OCI-LY7 (cell line): ENCODE measurements at regions of chr2 and their contacts with region 1.

Region 1: GRCh38 chr2:46984642-46985476 is 69.3 kb upstream of the MCFD2 start:
- DNase-seq: peak; percentile 72
- H3K4me3 ChIP-seq: peak overlapping the region; percentile 61
- H3K27ac ChIP-seq: peak overlapping the region; percentile 99
- H3K4me1 ChIP-seq: peaks cover 87% of the 10 kb centered on the region
- CTCF ChIP-seq: no peak

Region 2: DNA sequence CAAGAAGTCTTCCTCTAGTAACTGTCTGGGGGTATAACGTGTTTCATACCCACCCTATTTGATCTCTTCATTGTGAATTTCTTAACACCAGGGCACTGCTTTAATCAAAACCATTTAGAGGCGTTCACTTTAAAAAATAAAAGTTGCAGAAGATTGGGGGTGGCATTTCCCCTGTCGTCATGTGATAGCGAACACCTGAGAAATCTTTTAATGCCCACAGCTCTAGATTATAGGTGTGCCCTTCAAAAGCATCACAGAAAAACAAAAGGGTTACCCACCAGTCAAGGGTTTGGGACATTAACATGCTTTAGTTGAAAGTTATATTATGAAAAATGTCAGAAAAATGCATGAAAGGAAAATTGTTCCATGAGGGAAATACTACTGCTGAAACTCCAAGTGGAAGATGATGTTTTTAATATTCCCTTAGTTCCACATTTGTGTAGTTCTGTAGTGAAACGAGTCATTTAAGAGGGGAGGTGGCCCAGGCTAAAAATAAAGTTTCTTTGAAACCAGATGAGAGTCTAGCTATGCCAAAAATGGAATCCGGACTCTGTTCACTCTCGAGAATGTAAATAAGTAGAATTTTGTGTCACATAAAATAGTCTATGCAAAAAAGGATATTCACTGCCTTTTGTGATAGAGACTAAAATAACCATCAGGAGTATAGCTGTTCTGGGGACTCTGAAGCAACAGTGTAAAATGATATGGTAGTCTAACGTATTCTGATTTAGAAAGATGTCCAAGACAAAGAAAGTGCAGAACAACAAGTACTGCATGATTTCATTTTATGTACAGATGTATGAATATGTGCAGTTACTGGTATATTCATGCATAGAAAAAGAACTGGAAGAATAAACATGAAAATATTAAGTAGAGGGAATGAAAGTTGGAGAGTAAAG is 410.2 kb before region 1 on chr2:
- CTCF ChIA-PET with region 1: no interaction called
- POLR2A ChIA-PET with region 1: no interaction called
- intact Hi-C with region 1: loop called (anchors 5 kb)
- DNase-seq: peak; percentile 91
- H3K4me3 ChIP-seq: peak overlapping the region; percentile 57
- H3K27ac ChIP-seq: peak overlapping the region; percentile 100
- H3K4me1 ChIP-seq: peaks cover 82% of the 10 kb centered on the region
- CTCF ChIP-seq: no peak

Region 3: DNA sequence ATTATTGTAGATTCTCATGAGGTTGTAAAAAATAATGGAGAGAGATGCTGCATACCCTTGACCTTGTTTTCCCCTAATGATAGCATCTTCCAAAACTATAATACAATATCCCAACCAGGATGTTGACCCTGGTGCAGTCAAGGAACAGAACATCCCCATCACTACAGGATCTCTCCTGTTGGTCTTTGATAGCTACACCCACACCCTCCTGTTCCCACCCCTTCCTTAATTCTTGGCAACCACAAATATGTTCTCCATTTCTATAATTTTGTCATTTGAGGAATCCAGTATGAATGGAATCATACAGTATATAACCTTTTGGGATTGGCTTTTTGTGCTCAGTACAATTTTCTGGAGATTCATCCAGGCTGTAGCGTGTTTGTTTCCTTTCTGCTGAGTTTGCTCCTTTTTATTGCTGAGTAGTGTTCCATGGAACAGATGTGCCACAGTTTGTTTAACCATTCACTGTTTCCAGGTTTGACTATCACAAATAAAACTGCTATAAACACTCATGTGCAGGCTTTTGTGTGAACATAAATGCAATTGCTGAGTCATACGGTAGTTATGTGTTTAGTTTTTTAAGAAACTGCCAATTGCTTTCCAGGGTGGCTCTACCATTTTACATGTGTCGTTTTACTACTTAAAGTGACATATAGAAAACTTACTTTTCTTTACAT is 91.5 kb before region 1 on chr2:
- CTCF ChIA-PET with region 1: no interaction called
- POLR2A ChIA-PET with region 1: no interaction called
- intact Hi-C with region 1: no loop called
- DNase-seq: no peak
- H3K4me3 ChIP-seq: no peak overlapping the region
- H3K27ac ChIP-seq: no peak overlapping the region
- H3K4me1 ChIP-seq: no peaks in the 10 kb centered on the region
- CTCF ChIP-seq: no peak

Region 4: DNA sequence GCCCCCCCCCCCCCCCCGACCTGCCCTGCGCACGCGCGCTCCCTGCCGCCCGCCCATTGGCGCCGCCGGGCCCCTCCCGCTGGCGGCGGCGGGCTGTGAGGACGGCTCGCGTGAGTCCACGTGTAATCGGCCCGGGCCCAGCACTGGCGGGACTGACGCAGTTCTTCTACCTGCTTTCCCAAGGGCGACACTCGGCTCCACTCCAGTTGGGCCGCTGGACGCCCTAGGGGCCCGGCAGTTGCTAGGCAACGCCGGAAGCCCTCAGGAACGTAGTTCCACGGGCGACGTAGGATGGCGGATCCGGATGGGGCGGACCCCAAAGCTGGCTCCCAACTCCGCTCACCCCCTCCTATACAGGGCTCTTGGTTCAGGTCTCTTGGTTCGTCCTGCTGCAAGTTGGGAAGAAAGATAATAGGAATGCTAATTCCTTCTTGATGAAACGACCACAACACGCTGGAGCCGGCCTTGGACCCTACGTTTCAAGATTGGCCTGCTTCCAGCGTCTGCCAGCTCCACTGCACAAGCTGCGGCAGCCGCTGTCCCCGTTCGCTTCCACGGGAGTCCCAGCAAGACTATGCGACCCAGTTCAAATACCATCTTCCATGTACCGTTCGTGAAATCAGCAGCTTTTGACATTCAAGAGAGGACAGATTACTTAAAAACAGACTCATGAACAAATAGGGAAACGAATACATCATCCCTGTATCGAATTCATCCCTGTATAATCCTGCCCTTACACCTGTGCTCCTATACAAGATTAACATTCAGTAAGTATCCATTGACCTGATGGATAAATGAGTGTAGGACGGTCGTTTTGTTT is 68.8 kb before region 1 on chr2:
- CTCF ChIA-PET with region 1: no interaction called
- POLR2A ChIA-PET with region 1: interaction called, 9 read pairs
- intact Hi-C with region 1: loop called (anchors 1 kb)
- DNase-seq: peak; percentile 81
- H3K4me3 ChIP-seq: peak overlapping the region; percentile 84
- H3K27ac ChIP-seq: peak overlapping the region; percentile 52
- H3K4me1 ChIP-seq: peaks cover 46% of the 10 kb centered on the region
- CTCF ChIP-seq: no peak

Region 5: DNA sequence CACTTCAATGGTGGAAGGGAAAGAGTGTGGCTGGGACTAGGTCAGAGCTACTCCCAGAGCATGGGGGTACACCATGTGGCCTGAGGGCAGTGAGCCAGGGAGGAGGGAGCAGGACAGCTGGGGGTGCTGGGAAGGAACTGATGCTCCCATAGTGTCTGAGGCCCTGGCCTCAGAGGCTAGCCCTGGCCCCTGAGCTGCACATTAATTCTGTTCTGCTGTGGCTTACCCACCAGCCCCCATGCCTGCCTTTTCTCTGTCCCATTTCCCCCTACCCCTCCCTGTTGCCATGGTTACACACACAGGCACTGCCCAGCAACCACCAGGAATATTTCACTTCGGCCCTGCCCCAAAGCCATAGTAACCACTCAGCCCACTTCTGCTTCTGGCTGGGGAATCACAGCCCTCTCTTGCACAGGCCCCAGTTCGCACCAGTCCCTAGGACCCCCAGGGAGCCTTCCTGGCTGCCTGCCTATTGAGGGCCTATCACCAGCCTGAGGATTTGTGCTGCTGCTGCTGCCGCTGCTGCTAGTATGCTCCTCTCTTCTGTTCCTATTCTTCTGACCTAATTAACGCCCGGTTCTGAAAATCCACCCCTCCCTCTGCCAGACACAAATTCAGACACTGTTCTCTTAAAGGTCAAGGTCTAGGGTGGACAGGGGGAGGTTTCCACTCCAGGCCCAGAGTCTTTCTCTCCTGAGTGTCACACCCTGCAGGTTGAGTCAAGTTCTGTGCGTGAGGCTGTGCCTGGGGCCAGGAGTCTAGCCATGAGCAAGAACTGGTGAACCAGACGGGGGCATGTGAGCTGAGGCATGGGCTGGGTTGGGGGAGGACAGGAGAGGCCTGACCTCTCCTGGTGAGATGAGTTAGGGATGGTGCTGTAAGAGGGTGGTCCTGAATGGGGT is 17.9 kb after region 1 on chr2:
- CTCF ChIA-PET with region 1: no interaction called
- POLR2A ChIA-PET with region 1: no interaction called
- intact Hi-C with region 1: no loop called
- DNase-seq: no peak
- H3K4me3 ChIP-seq: no peak overlapping the region
- H3K27ac ChIP-seq: no peak overlapping the region
- H3K4me1 ChIP-seq: no peaks in the 10 kb centered on the region
- CTCF ChIP-seq: no peak